ENCODE measurements at regions of chr2 and their contacts with region 1.

Region 1: DNA sequence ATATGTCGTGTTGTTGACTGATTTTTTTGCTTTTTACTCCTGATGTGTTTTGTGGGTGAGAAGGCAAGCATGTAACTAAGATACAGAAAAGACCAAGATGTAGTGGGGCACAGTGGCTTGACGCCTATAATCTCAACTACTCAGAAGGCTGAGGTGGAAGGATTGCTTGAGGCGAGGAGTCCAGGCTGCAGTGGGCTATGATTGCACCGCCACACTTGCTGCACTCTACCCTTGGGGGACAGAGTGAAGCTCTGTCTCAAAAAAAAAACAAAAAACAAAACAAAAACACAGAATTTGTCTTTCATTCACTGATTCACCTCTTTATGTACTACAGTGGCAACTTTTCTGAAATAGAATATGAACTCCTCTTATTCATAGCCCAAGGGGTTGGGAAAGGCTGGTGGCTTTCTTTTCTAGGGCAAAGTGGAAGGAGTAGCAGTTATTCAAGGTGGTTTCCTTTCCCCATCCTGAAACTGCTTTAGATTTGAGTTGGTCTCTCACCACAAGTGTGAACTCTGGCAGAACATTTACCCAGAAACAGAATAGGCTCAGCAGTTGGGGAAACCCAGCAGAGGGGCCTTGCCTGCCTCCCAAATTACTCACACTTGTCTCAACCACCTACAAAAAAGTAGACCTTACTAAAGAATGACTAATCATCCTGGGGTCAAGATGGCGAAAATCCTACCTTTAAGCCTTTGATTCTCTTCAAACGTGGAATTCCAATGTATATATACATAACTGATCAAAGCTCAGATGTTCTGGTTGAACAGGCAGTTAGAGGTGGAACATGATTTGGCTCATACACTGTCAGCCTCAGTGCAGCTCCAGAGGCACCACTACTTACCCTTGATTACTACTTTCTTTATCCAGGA is 6.5 kb downstream of the TANK start:
- DNase-seq: peak; percentile 90
- H3K4me3 Mint-ChIP-seq: peak overlapping the region; percentile 69
- H3K27ac Mint-ChIP-seq: peak overlapping the region; percentile 94
- H3K4me1 Mint-ChIP-seq: peaks cover 76% of the 10 kb centered on the region
- H3K27me3 Mint-ChIP-seq: no peaks in the 10 kb centered on the region

Region 2: DNA sequence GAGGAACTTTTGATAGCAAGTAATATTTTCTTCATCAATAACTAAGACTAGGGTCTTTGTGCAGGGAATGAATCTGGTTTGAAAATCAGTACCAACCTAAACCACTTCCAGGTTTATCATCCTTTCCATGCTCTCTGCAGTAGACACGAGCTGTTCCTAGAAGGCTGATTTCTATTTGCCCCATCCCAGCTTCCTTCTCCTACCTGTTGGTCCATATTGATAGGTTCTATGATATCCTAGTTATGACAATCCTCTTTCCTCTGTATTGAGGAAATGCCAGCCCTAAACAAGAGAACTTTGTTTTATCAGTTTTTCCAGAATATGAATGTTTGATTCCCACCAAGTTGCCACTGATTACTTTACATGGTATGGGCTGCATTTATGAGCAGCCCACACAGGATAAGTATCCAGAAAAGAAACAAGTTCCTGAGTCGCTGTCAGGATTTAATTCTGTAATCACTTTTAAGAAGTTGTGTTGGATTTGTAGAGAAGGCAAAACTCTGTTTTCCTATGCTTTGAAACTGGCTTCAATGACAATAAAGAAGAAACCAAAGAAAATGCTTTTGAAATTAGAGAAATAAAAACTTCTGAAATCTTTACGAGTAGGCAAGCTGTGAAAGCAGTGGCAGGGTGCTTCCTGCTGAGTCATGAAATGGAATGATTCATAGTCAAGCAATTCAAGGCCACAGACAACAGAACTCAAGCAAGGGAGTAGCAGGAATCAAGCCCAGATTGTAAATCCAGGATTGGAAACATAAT is 43.8 kb before region 1 on chr2:
- intact Hi-C with region 1: loop called (anchors 1 kb)
- DNase-seq: peak; percentile 69
- H3K4me3 Mint-ChIP-seq: peak overlapping the region; percentile 1
- H3K27ac Mint-ChIP-seq: peak overlapping the region; percentile 42
- H3K4me1 Mint-ChIP-seq: peaks cover 20% of the 10 kb centered on the region
- H3K27me3 Mint-ChIP-seq: no peaks in the 10 kb centered on the region

Region 3: DNA sequence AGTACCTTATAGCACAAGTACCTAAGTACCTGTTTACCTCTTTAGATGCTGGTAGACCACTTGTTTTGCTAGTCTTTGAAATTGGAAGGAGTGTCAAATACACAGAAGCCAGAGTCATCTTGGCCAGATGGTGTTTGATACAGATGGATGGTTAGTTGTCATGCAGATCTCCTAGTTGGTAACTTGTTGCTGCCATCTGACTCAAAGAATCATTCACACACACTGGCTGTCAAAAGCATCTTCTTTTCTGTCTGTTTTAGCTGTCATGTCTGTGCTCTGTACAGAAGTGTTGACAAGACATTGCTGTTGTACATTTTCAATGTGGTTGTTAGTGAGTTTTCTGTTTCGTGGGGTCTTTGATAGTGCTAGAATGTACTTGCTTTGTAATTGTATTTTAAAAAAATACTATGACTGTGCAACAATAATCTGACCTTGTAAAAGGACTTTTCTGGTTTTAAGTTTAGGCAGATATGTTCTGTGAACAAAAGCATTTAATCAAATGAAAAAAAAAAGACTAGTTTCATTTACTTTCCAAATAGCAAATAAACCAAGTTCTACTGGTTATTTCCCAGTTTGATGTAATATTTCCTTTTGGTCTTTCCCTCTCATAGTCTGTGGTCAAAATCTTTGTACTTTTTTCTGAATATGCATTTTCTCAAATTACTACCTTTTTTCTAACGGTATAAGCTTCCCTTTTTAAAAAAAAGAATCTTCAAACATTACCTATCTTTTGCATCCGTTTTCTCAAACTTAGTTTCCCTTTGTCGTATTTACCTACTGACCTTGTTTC is 33.3 kb after region 1 on chr2:
- intact Hi-C with region 1: loop called (anchors 5 kb)
- DNase-seq: no peak
- H3K4me3 Mint-ChIP-seq: peak overlapping the region; percentile 4
- H3K27ac Mint-ChIP-seq: peak overlapping the region; percentile 78
- H3K4me1 Mint-ChIP-seq: peaks cover 21% of the 10 kb centered on the region
- H3K27me3 Mint-ChIP-seq: no peaks in the 10 kb centered on the region